ENCODE measurements at regions of chr5 and their contacts with region 1.

Region 1: DNA sequence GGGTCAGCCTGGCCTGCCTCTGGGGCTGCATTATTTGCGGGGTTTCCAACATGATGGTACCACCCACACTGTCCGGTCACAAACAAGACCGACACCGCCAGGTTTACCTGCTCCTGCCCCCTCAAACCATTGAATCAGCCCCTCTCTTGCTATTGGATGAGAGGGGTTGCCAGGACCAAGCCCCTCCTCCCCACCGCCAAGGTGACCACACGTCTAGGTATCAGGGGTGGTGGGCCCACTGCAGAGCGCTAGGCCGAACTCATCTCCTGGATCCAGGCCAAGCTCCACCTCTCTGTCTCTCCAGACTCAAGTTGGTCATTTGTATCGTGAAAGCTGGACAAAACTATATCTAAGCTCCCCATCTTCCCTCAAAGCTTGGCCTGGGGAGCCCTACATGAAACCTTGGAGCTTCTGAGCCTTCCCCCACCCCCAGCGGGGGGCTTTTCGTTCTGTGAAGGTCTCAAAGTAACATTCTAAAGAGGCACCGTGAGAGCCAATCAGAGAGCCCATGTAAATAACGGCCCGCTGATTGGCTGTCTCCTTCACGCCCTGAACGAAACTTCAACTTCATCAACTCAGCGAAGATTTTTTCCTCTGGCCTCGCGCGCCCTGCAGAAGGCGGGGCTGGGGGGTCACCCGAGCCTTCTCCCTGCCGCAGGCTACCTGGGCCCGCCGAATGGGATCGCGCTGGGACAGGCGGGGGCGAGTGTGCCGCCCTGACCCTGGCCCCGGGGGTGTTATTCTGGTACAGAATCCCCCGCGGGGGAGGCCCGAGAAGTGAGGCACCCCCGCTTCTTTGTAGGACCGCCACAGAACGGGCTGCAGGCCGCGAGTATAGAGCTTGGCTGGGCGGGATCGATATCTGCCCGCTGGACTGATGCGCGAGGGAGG is 49.6 kb upstream of the PSD2 start:
- DNase-seq: peak; percentile 84
- ATAC-seq: peak; percentile 29
- H3K4me3 ChIP-seq: peak overlapping the region in 4 of 5 experiments; percentile 57 to 71 (median 58)
- H3K4me3 Mint-ChIP-seq: peak overlapping the region; percentile 89
- H3K27ac ChIP-seq: peak overlapping the region; percentile 82 to 85
- H3K27ac Mint-ChIP-seq: peak overlapping the region; percentile 94
- H3K4me1 ChIP-seq: peaks cover 50 to 68% of the 10 kb centered on the region in 2 donors
- H3K4me1 Mint-ChIP-seq: peaks cover 79% of the 10 kb centered on the region
- H3K27me3 ChIP-seq: peaks cover 0 to 2% (median 0%) of the 10 kb centered on the region in 4 experiments
- H3K27me3 Mint-ChIP-seq: no peaks in the 10 kb centered on the region
- CTCF ChIP-seq: no peak

Region 2: GRCh38 chr5:139403787-139404483 is 342.1 kb before region 1 on chr5 and contains the start of gene SPATA24:
- CTCF ChIA-PET with region 1: no interaction called
- POLR2A ChIA-PET with region 1: no interaction called
- intact Hi-C with region 1: loop called (anchors 10 kb)
- DNase-seq: peak; percentile 99
- ATAC-seq: peak; percentile 85
- H3K4me3 ChIP-seq: peak within 1 kb of the TSS; percentile 50 to 73 (median 68)
- H3K4me3 Mint-ChIP-seq: peak within 1 kb of the TSS; percentile 95
- H3K27ac ChIP-seq: peak within 1 kb of the TSS; percentile 85 to 86
- H3K27ac Mint-ChIP-seq: peak within 1 kb of the TSS; percentile 97
- H3K4me1 ChIP-seq: peaks cover 33 to 43% of the 10 kb centered on the region in 2 donors
- H3K4me1 Mint-ChIP-seq: peaks cover 43% of the 10 kb centered on the region
- H3K27me3 ChIP-seq: no peaks in the 10 kb centered on the region
- H3K27me3 Mint-ChIP-seq: no peaks in the 10 kb centered on the region
- CTCF ChIP-seq: no peak
- total RNA-seq, gene SPATA24: 6.4 and 8.2 TPM in 2 replicates

Region 3: GRCh38 chr5:139446956-139447779 is 298.9 kb before region 1 on chr5:
- CTCF ChIA-PET with region 1: no interaction called
- POLR2A ChIA-PET with region 1: no interaction called
- intact Hi-C with region 1: no loop called
- DNase-seq: no peak
- ATAC-seq: no peak
- H3K4me3 ChIP-seq: no peak overlapping the region
- H3K4me3 Mint-ChIP-seq: no peak overlapping the region
- H3K27ac ChIP-seq: no peak overlapping the region
- H3K27ac Mint-ChIP-seq: no peak overlapping the region
- H3K4me1 ChIP-seq: no peaks in the 10 kb centered on the region
- H3K4me1 Mint-ChIP-seq: peaks cover 3% of the 10 kb centered on the region
- H3K27me3 ChIP-seq: no peaks in the 10 kb centered on the region
- H3K27me3 Mint-ChIP-seq: no peaks in the 10 kb centered on the region
- CTCF ChIP-seq: no peak

Region 4: DNA sequence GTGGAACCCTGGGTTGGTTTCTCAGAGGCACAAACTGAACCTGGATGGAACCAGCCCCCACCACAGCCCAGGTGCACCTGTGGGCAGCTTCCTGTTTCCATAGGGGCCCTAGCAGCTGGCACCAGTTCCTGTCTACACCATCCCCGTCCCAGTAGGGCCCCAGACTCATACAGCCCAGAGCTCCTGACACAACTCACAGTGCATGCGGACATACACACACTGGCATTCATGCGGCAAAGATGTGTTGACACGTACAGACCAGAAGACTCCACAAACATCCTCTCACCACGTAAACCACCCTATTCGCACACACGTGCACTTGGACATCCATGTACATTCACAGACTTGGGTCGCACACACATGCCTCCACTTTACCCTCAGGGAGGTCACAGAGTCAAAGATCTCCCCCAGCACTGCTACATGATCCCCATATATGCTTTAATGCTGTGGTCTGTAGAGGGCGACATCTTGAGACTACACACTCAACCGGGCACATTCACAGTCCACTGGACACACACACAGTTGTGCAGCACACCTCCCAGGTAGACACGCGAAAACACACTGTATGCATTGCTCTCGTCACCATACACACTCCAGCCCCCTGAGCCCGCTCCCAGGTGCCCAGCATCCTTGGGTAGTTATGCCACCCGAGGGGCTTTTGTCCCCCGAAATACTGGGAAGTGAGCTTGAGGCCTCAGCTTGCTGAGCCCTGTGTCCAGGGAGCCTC is 75.5 kb before region 1 on chr5:
- CTCF ChIA-PET with region 1: interaction called, 7 read pairs
- POLR2A ChIA-PET with region 1: interaction called, 21 read pairs
- intact Hi-C with region 1: loop called (anchors 1 kb)
- DNase-seq: peak; percentile 89
- ATAC-seq: peak; percentile 69
- H3K4me3 ChIP-seq: peak overlapping the region in 4 of 5 experiments; percentile 40 to 71 (median 52)
- H3K4me3 Mint-ChIP-seq: peak overlapping the region; percentile 86
- H3K27ac ChIP-seq: peak overlapping the region; percentile 89 to 90
- H3K27ac Mint-ChIP-seq: peak overlapping the region; percentile 95
- H3K4me1 ChIP-seq: peaks cover 88 to 98% of the 10 kb centered on the region in 2 donors
- H3K4me1 Mint-ChIP-seq: peaks cover 88% of the 10 kb centered on the region
- H3K27me3 ChIP-seq: no peaks in the 10 kb centered on the region
- H3K27me3 Mint-ChIP-seq: no peaks in the 10 kb centered on the region
- CTCF ChIP-seq: peak; percentile 47

Region 5: GRCh38 chr5:139696894-139697658 is 49.0 kb before region 1 on chr5:
- CTCF ChIA-PET with region 1: no interaction called
- POLR2A ChIA-PET with region 1: interaction called, 4 read pairs
- intact Hi-C with region 1: loop called (anchors 10 kb)
- DNase-seq: peak; percentile 55
- ATAC-seq: peak; percentile 34
- H3K4me3 ChIP-seq: peak overlapping the region in 4 of 5 experiments; percentile 33 to 56 (median 45)
- H3K4me3 Mint-ChIP-seq: peak overlapping the region; percentile 82
- H3K27ac ChIP-seq: no peak overlapping the region
- H3K27ac Mint-ChIP-seq: peak overlapping the region; percentile 72
- H3K4me1 ChIP-seq: peaks cover 41 to 48% of the 10 kb centered on the region in 2 donors
- H3K4me1 Mint-ChIP-seq: peaks cover 45% of the 10 kb centered on the region
- H3K27me3 ChIP-seq: peaks cover 0 to 35% (median 10%) of the 10 kb centered on the region in 4 experiments
- H3K27me3 Mint-ChIP-seq: peaks cover 17% of the 10 kb centered on the region
- CTCF ChIP-seq: no peak

Region 6: DNA sequence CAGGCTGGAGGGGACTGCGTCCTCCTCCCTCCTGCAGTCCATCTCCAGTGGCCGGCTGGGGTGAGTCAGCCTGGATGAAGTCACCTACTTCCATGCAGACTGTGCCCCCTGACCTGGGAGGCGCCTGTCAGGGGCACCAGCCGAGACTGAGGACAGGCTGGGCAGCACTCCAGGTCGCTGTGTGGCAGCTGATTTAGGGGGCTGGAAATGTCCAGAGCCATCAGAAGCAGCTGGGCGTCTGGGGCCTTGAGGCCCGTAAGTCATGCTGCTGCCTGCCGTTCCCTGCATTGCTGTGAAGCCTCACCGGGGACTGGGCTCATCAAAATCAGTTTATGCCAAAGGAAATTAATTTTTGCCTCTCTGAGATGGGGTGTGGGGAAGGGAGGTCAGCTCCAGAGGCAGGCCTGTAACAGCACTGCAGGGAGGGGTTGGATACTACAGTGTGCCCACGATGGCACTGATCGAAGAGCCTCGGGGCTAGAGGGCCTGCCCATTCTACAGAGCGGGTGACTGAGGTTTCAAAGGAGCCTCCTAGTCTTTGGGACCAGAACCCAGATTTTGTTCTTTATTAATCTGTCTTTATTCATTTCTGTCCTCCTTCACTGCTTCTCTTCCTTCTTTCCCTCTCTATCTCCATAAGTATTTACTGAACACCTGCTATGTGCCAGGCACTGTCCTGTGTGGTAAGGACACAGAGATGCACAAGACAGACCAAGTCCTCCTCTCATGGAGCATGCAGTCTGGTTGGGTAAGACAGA is 20.8 kb before region 1 on chr5:
- CTCF ChIA-PET with region 1: interaction called, 5 read pairs
- POLR2A ChIA-PET with region 1: interaction called, 3 read pairs
- intact Hi-C with region 1: loop called (anchors 1 kb)
- DNase-seq: no peak
- ATAC-seq: no peak
- H3K4me3 ChIP-seq: no peak overlapping the region
- H3K4me3 Mint-ChIP-seq: no peak overlapping the region
- H3K27ac ChIP-seq: no peak overlapping the region
- H3K27ac Mint-ChIP-seq: no peak overlapping the region
- H3K4me1 ChIP-seq: peaks cover 6 to 29% of the 10 kb centered on the region in 2 donors
- H3K4me1 Mint-ChIP-seq: peaks cover 18% of the 10 kb centered on the region
- H3K27me3 ChIP-seq: no peaks in the 10 kb centered on the region
- H3K27me3 Mint-ChIP-seq: no peaks in the 10 kb centered on the region
- CTCF ChIP-seq: no peak